Aorta (tissue), 5 donors: ENCODE measurements at regions of chr10 and their contacts with region 1.

Region 1: GRCh38 chr10:31075434-31075833 is 43.8 kb upstream of the ZNF438 start:
- DNase-seq: no peak
- ATAC-seq: no peak
- H3K4me3 ChIP-seq: no peak overlapping the region
- H3K27ac ChIP-seq: peak overlapping the region; percentile 77 to 99
- H3K4me1 ChIP-seq: peaks cover 14 to 20% of the 10 kb centered on the region in 2 donors
- H3K27me3 ChIP-seq: no peaks in the 10 kb centered on the region

Region 2: DNA sequence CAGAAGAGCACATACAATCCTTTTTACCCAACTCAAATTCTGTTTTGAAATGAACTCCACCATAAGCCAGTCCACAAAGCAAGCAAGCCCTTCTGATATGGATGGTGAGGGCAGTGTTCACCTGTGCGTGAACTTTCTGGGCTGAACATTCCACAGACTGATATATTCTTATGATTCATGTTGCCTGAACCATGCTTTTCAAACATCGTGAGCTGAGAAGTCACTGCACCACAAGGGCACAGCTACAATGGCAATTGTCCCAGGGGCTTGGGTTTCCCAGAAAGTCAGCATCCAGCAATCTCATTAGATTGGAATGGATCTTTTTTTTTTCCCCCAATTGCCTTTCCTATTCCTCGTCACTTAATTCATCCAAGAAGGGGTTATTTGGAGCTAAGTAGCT is 43.1 kb after region 1 on chr10:
- intact Hi-C with region 1: loop called in 1 of 2 experiments (anchors 5 kb)
- DNase-seq: no peak
- ATAC-seq: no peak
- H3K4me3 ChIP-seq: no peak overlapping the region
- H3K27ac ChIP-seq: peak overlapping the region in 1 of 2 donors; percentile 73
- H3K4me1 ChIP-seq: peaks cover 2 to 5% of the 10 kb centered on the region in 2 donors
- H3K27me3 ChIP-seq: no peaks in the 10 kb centered on the region